ENCODE measurements at regions of chr2 and their contacts with region 1.

Region 1: GRCh38 chr2:203814661-203815540 is 52.7 kb upstream of the CTLA4 start:
- DNase-seq: peak; percentile 84
- H3K4me3 Mint-ChIP-seq: peak overlapping the region; percentile 72
- H3K27ac Mint-ChIP-seq: peak overlapping the region; percentile 69
- H3K4me1 Mint-ChIP-seq: peaks cover 47% of the 10 kb centered on the region
- H3K27me3 Mint-ChIP-seq: no peaks in the 10 kb centered on the region

Region 2: DNA sequence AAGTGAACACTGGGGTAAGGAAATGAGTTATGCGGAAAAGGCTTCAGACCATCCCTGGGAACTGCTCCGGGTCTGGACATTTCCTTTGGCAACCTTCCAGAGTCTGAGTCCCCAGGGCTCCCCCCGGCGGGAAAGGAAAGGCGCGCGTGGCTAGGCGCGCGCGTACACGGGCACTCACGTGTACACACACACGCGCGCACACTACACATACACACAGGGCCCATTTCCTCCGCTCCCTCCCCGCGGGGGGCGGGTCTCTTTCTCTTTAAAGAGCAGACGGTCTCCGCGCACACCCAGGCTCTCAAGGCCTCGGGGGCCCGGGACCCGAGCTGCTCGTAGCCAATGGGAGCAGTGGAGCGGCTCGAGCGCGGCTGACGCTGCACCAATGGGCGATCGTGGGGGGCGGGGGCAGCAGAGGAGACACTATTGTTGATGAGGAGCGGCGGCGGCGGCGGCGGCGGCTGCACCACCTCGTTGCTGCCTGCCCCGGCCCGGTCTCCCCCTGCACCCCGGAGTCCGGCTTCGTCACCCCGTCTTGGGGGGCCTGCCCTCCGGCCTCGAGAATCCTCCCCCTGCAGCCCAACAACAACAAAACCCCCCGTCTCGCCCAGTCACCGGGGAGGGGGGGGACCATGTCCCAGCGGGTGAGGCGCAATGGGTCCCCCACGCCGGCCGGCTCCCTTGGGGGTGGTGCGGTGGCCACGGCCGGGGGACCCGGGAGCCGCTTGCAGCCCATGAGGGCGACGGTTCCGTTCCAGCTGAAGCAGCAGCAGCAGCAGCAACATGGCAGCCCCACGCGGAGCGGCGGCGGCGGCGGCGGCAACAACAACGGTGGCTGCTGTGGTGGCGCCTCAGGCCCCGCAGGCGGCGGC is 1180.1 kb before region 1 on chr2 and contains the start of gene FAM117B:
- intact Hi-C with region 1: loop called (anchors 10 kb)
- DNase-seq: peak; percentile 99
- H3K4me3 Mint-ChIP-seq: peak within 1 kb of the TSS; percentile 98
- H3K27ac Mint-ChIP-seq: peak within 1 kb of the TSS; percentile 97
- H3K4me1 Mint-ChIP-seq: peaks cover 35% of the 10 kb centered on the region
- H3K27me3 Mint-ChIP-seq: no peaks in the 10 kb centered on the region
- total RNA-seq, gene FAM117B: 14.5 TPM in 2 replicates

Region 3: DNA sequence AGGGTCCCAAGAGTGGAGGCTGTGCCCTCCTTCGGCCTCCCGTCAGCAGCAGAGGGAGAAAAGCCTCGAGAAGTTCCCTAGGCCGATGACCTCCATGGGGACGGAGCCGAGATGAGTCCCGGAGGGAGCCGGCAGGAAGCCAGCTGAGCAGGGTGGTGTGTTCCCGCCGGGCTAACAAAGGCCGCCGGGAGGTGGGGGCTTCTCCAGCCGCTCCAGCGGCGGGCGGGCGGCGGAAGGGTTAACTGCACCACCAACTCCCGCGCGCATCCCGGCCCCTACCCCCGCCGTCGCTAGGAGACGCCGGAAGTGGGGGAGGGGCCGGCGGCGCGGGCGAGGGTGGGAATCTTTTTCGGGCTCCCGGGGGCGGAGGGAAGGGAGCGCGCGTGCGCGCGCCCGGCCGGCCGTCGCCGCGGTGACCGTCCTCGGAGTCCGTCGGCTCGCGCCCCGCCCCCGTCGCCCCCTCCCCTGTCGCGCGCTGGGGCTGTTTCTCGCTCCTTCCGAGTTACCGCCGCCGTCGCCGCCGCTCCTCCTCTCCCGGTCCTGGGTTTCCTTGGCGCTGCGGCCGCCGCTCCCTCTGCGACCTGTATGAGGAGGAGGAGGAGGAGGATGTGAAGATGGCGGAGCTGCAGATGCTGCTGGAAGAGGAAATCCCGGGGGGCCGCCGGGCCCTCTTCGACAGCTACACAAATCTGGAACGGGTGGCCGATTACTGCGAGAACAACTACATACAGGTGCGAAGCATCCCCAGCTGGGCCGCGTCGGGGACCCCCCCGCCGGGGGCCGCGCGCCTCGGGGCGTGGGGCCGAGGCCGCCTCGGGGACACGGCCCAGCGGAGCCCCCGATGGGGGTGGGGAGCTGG is 486.8 kb before region 1 on chr2 and contains the start of gene ABI2:
- intact Hi-C with region 1: loop called (anchors 10 kb)
- DNase-seq: peak; percentile 91
- H3K4me3 Mint-ChIP-seq: peak within 1 kb of the TSS; percentile 91
- H3K27ac Mint-ChIP-seq: peak within 1 kb of the TSS; percentile 86
- H3K4me1 Mint-ChIP-seq: peaks cover 20% of the 10 kb centered on the region
- H3K27me3 Mint-ChIP-seq: no peaks in the 10 kb centered on the region
- total RNA-seq, gene ABI2: 27.5 and 32.7 TPM in 2 replicates

Region 4: GRCh38 chr2:203650860-203651613 is 163.9 kb before region 1 on chr2:
- intact Hi-C with region 1: loop called (anchors 2 kb)
- DNase-seq: peak; percentile 65
- H3K4me3 Mint-ChIP-seq: no peak overlapping the region
- H3K27ac Mint-ChIP-seq: no peak overlapping the region
- H3K4me1 Mint-ChIP-seq: peaks cover 24% of the 10 kb centered on the region
- H3K27me3 Mint-ChIP-seq: no peaks in the 10 kb centered on the region

Region 5: GRCh38 chr2:203763938-203764664 is 50.8 kb before region 1 on chr2:
- intact Hi-C with region 1: loop called (anchors 2 kb)
- DNase-seq: peak; percentile 55
- H3K4me3 Mint-ChIP-seq: peak overlapping the region; percentile 19
- H3K27ac Mint-ChIP-seq: peak overlapping the region; percentile 89
- H3K4me1 Mint-ChIP-seq: peaks cover 62% of the 10 kb centered on the region
- H3K27me3 Mint-ChIP-seq: no peaks in the 10 kb centered on the region

Region 6: GRCh38 chr2:203830304-203831055 is 15.6 kb after region 1 on chr2:
- intact Hi-C with region 1: loop called (anchors 1 kb)
- DNase-seq: peak; percentile 81
- H3K4me3 Mint-ChIP-seq: peak overlapping the region; percentile 53
- H3K27ac Mint-ChIP-seq: peak overlapping the region; percentile 93
- H3K4me1 Mint-ChIP-seq: peaks cover 21% of the 10 kb centered on the region
- H3K27me3 Mint-ChIP-seq: no peaks in the 10 kb centered on the region